ENCODE measurements at regions of chr2 and their contacts with region 1.

Region 1: GRCh38 chr2:124018890-124019289 is 6.2 kb upstream of the CNTNAP5 start:
- DNase-seq: peak; percentile 22
- H3K4me3 Mint-ChIP-seq: no peak overlapping the region
- H3K27ac Mint-ChIP-seq: no peak overlapping the region
- H3K4me1 Mint-ChIP-seq: peaks cover 4% of the 10 kb centered on the region
- H3K27me3 Mint-ChIP-seq: no peaks in the 10 kb centered on the region
- CTCF ChIP-seq: peak; percentile 43

Region 2: GRCh38 chr2:122960759-122961641 is 1057.9 kb before region 1 on chr2:
- CTCF ChIA-PET with region 1: interaction called, 3 read pairs
- POLR2A ChIA-PET with region 1: no interaction called
- intact Hi-C with region 1: loop called (anchors 1 kb)
- DNase-seq: peak; percentile 94
- H3K4me3 Mint-ChIP-seq: peak overlapping the region; percentile 44
- H3K27ac Mint-ChIP-seq: peak overlapping the region; percentile 59
- H3K4me1 Mint-ChIP-seq: peaks cover 18% of the 10 kb centered on the region
- H3K27me3 Mint-ChIP-seq: no peaks in the 10 kb centered on the region
- CTCF ChIP-seq: peak; percentile 29

Measured in MCF 10A (cell line).